Heart right ventricle (tissue), 16 donors: ENCODE measurements at regions of chr13 and their contacts with region 1.

Region 1: GRCh38 chr13:44306401-44307192 is 67.0 kb upstream of the SERP2 start:
- DNase-seq: peak; percentile 49 to 89
- ATAC-seq: peak; percentile 58 to 89 (median 72)
- H3K4me3 ChIP-seq: peak overlapping the region in 3 of 10 donors; percentile 22 to 25 (median 22)
- H3K27ac ChIP-seq: peak overlapping the region; percentile 39 to 95 (median 89)
- H3K4me1 ChIP-seq: peaks cover 5 to 94% (median 52%) of the 10 kb centered on the region in 9 donors
- H3K27me3 ChIP-seq: no peaks in the 10 kb centered on the region
- CTCF ChIP-seq: no peak

Region 2: GRCh38 chr13:44191504-44192171 is 115.0 kb before region 1 on chr13:
- intact Hi-C with region 1: loop called in 1 of 10 experiments (anchors 5 kb)
- DNase-seq: peak in 1 of 2 donors; percentile 71
- ATAC-seq: peak; percentile 76 to 97 (median 95)
- H3K4me3 ChIP-seq: peak overlapping the region in 3 of 10 donors; percentile 21
- H3K27ac ChIP-seq: peak overlapping the region in 6 of 10 donors; percentile 10 to 62 (median 51)
- H3K4me1 ChIP-seq: peaks cover 0 to 11% (median 0%) of the 10 kb centered on the region in 9 donors
- H3K27me3 ChIP-seq: no peaks in the 10 kb centered on the region
- CTCF ChIP-seq: peak; percentile 51 to 80 (median 70)

Region 3: GRCh38 chr13:44249431-44249836 is 57.2 kb before region 1 on chr13:
- intact Hi-C with region 1: no loop called
- DNase-seq: peak; percentile 58 to 59
- ATAC-seq: peak; percentile 60 to 87 (median 64)
- H3K4me3 ChIP-seq: no peak overlapping the region
- H3K27ac ChIP-seq: peak overlapping the region in 8 of 10 donors; percentile 28 to 76 (median 65)
- H3K4me1 ChIP-seq: peaks cover 2 to 42% (median 16%) of the 10 kb centered on the region in 9 donors
- H3K27me3 ChIP-seq: no peaks in the 10 kb centered on the region
- CTCF ChIP-seq: no peak

Region 4: DNA sequence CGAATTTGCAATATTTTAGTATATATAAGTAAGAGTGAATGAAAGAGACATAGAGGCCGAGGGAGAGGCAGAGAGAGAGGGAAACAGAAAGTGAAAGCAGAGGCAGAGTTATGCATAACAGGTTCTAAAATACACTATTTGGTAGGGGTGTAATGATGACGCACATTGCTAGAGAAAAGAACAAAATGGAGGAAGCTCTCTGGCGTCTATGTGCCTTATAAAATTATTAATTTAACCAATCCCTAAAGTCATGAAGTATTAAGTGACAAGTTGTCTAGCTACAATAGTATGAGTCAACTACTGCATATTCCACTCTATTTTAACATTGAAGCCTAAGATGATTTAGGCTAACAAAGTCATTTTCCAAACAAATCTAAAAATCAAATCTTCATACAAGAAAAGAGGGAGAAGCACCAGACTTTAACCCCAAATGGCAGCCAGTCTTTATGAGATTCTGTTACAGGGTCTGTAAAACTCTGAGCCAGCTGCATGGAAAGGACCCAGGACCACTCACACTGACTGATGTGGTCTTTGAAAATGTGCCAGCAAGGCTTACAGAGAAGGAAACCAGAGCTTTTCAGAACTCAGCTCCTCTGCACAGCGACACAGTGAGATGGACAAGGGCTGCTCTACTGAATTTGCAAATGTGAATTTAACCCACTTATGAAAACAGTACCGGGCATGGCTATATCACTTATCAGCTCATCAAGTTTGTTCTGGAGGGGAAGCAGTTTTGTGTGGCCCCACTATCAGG is 32.0 kb before region 1 on chr13:
- intact Hi-C with region 1: loop called in 1 of 10 experiments (anchors 5 kb)
- DNase-seq: no peak
- ATAC-seq: peak in 7 of 8 donors; percentile 62 to 87 (median 79)
- H3K4me3 ChIP-seq: peak overlapping the region in 5 of 10 donors; percentile 0 to 21 (median 9)
- H3K27ac ChIP-seq: peak overlapping the region; percentile 36 to 86 (median 77)
- H3K4me1 ChIP-seq: peaks cover 8 to 67% (median 56%) of the 10 kb centered on the region in 9 donors
- H3K27me3 ChIP-seq: no peaks in the 10 kb centered on the region
- CTCF ChIP-seq: no peak

Region 5: GRCh38 chr13:44364348-44365049 is 57.9 kb after region 1 on chr13:
- intact Hi-C with region 1: loop called in 1 of 10 experiments (anchors 5 kb)
- DNase-seq: no peak
- ATAC-seq: peak in 5 of 8 donors; percentile 34 to 52 (median 41)
- H3K4me3 ChIP-seq: no peak overlapping the region
- H3K27ac ChIP-seq: peak overlapping the region in 4 of 10 donors; percentile 16 to 58 (median 34)
- H3K4me1 ChIP-seq: peaks cover 0 to 29% (median 8%) of the 10 kb centered on the region in 9 donors
- H3K27me3 ChIP-seq: no peaks in the 10 kb centered on the region
- CTCF ChIP-seq: no peak